ENCODE measurements at regions of chr1 and their contacts with region 1.

Region 1: GRCh38 chr1:207004981-207005830 is 27.4 kb downstream of the C1orf116 start:
- DNase-seq: peak; percentile 50 to 59
- H3K4me3 ChIP-seq: no peak overlapping the region
- H3K27ac ChIP-seq: peak overlapping the region; percentile 93
- H3K4me1 ChIP-seq: peaks cover 80% of the 10 kb centered on the region
- H3K27me3 ChIP-seq: no peaks in the 10 kb centered on the region
- CTCF ChIP-seq: peak; percentile 71

Region 2: DNA sequence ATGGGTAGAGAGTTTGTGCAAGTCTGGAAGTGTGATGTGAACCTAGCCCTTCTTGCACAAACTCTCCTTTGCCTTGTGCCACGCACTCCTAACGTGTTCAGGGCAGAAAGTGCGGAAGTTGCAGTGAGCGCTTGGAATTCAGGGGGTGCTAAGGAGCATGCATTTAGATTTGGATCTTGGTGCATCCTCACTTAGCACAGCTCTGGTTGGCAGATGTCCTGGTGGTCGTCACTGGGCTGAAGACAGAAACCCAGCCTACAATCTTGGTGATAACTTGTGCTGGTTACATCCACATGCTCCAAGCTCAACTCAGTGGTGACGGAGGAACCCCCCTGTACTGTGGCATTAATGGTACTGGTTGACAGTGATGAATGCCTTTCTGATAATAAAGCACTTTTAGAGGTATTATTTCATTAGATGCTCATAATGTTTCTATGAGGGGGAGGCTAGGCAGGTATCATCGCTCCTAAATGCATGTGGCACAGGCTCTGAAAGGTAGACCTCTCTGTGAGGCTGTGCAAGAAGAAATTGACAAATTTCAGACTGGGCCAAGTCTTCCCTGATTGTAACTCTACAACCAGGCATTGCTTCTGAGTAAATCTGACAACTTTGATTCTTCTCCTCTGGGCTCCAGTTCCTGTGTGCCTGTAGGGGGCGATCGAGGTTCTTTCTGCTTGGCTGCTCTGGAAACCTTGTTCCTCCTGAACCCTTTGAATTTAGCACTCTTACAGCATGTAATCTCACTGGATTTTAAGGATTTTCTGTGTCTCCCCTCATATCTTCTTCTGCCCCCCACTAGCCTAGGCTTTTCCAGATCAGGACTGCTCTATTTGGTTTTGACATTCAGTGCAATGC is 279.9 kb before region 1 on chr1:
- CTCF ChIA-PET with region 1: no interaction called
- POLR2A ChIA-PET with region 1: no interaction called
- intact Hi-C with region 1: no loop called
- DNase-seq: peak in 1 of 2 experiments; percentile 21
- H3K4me3 ChIP-seq: no peak overlapping the region
- H3K27ac ChIP-seq: no peak overlapping the region
- H3K4me1 ChIP-seq: peaks cover 44% of the 10 kb centered on the region
- H3K27me3 ChIP-seq: no peaks in the 10 kb centered on the region
- CTCF ChIP-seq: no peak; the same call in 1 of the 2 replicates

Region 3: GRCh38 chr1:206878456-206878855 is 126.8 kb before region 1 on chr1:
- CTCF ChIA-PET with region 1: no interaction called
- POLR2A ChIA-PET with region 1: no interaction called
- intact Hi-C with region 1: no loop called
- DNase-seq: no peak
- H3K4me3 ChIP-seq: no peak overlapping the region
- H3K27ac ChIP-seq: no peak overlapping the region
- H3K4me1 ChIP-seq: no peaks in the 10 kb centered on the region
- H3K27me3 ChIP-seq: no peaks in the 10 kb centered on the region
- CTCF ChIP-seq: no peak

Region 4: GRCh38 chr1:206935491-206936067 is 69.6 kb before region 1 on chr1:
- CTCF ChIA-PET with region 1: no interaction called
- POLR2A ChIA-PET with region 1: no interaction called
- intact Hi-C with region 1: no loop called
- DNase-seq: no peak
- H3K4me3 ChIP-seq: no peak overlapping the region
- H3K27ac ChIP-seq: no peak overlapping the region
- H3K4me1 ChIP-seq: no peaks in the 10 kb centered on the region
- H3K27me3 ChIP-seq: no peaks in the 10 kb centered on the region
- CTCF ChIP-seq: peak; percentile 41; the same call in 1 of the 2 replicates

Region 5: GRCh38 chr1:207017615-207018559 is 12.7 kb after region 1 on chr1:
- CTCF ChIA-PET with region 1: interaction called, 11 read pairs
- POLR2A ChIA-PET with region 1: interaction called, 8 read pairs
- intact Hi-C with region 1: loop called (anchors 1 kb)
- DNase-seq: no peak
- H3K4me3 ChIP-seq: no peak overlapping the region
- H3K27ac ChIP-seq: no peak overlapping the region
- H3K4me1 ChIP-seq: peaks cover 35% of the 10 kb centered on the region
- H3K27me3 ChIP-seq: no peaks in the 10 kb centered on the region
- CTCF ChIP-seq: no peak

Region 6: DNA sequence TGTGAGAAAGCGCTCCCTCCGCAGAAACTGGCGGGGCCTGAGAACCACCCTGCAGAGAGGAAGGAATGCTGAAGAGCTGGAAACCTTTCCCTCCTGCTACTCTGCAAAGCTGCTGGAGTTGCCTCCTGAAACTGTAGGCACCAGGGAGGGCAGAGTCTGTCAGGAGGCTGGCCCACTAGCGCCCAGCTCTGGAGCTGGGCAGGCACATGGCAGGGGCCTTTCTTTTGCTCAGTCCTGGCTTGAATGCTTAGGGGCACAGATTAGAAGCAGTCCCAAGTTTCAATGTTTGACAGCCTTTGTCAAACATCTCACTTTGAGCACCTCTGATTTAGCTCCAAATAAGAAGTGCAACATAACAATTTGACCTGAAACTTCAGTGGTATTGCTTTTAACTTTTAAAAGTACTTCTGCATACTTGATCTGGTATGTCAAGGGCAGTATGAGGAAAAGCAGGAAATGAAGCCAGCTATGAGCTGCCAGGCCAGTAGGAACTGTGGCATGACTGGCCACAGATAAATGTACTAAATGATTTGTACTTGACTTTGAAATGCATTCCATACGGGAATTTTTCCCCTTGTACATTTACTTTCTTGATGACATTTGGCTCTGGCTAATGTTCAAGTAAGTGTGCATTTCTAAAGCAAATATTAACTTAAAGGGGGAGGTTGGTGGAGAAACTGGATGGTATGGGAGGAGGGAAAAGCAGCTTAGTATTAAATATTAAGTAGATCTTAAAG is 20.1 kb after region 1 on chr1:
- CTCF ChIA-PET with region 1: interaction called, 13 read pairs
- POLR2A ChIA-PET with region 1: interaction called, 5 read pairs
- intact Hi-C with region 1: loop called (anchors 1 kb)
- DNase-seq: peak; percentile 80 to 90
- H3K4me3 ChIP-seq: no peak overlapping the region
- H3K27ac ChIP-seq: peak overlapping the region; percentile 97
- H3K4me1 ChIP-seq: peaks cover 90% of the 10 kb centered on the region
- H3K27me3 ChIP-seq: no peaks in the 10 kb centered on the region
- CTCF ChIP-seq: no peak

Region 7: DNA sequence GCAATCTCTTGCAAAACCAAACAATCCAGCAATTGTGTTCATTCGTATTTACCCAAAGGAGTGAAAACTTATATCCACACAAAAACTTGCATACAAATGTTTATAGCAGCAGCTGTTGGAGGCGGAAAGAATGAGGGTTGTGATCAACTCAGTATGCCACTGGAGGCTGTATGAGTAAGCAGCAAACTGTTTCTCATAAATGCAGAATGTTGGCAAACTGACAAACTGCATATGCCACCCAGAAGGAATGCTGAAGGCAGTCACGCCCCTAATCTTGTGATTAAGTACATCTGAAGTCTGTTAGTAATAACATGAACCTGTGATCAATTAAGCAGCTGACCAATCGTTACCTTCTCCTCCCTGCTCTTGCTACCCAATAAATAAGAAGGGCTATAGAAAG is 388.4 kb after region 1 on chr1:
- CTCF ChIA-PET with region 1: no interaction called
- POLR2A ChIA-PET with region 1: no interaction called
- intact Hi-C with region 1: loop called (anchors 5 kb)
- DNase-seq: peak; percentile 63 to 97
- H3K4me3 ChIP-seq: peak overlapping the region; percentile 30; the same call in 1 of the 2 replicates
- H3K27ac ChIP-seq: peak overlapping the region; percentile 73
- H3K4me1 ChIP-seq: peaks cover 29% of the 10 kb centered on the region
- H3K27me3 ChIP-seq: no peaks in the 10 kb centered on the region
- CTCF ChIP-seq: no peak

Measured in PC-9 (cell line).